AG04449 (cell line): ENCODE measurements at regions of chr19 and their contacts with region 1.

Region 1: GRCh38 chr19:46614114-46614722 is 10.7 kb downstream of the PTGIR start:
- DNase-seq: no peak
- H3K4me3 ChIP-seq: no peak overlapping the region
- CTCF ChIP-seq: peak; percentile 87

Region 2: GRCh38 chr19:46600384-46601317 is 13.6 kb before region 1 on chr19:
- CTCF ChIA-PET with region 1: interaction called, 117 read pairs
- POLR2A ChIA-PET with region 1: interaction called, 6 read pairs
- DNase-seq: peak; percentile 84
- H3K4me3 ChIP-seq: peak overlapping the region; percentile 89
- CTCF ChIP-seq: no peak

Region 3: DNA sequence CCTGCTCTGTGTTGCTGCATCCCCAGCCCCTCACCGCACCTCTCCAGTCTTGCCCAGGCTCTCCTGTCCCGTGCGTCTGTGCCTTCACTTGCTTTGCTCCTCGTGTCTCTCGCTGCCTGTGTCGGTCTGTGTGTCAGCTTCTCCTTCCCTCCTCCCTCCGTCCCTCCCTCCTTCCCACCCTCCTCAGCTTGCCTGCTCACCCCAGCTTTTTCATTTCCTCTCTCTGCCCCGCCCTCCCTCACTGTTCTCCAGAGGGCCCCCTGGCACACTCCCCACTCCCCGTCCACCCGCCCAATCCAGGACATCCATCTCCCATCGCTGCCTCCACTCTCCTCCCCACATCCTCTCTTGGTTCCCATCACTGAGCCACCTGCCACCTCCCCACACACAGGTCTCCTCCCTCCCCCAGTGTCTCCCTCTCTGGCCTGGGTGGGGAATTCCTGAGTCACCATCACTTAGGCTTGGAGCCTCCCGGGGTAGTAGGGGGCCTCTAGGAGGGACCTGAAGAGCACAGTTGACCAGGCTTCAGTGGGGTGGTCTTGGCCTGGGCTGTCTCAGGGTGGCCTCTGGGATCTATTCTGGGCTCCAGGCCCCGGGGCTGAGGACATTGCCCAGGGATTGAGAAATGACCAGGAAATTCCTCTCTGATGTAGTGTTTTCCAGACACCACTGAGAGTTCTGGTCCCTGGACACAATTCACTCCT is 10.9 kb after region 1 on chr19 and contains the start of gene PTGIR:
- CTCF ChIA-PET with region 1: interaction called, 66 read pairs
- POLR2A ChIA-PET with region 1: interaction called, 4 read pairs
- DNase-seq: no peak
- H3K4me3 ChIP-seq: peak within 1 kb of the TSS; percentile 50
- CTCF ChIP-seq: no peak

Region 4: GRCh38 chr19:46634045-46634655 is 19.9 kb after region 1 on chr19:
- CTCF ChIA-PET with region 1: interaction called, 63 read pairs
- POLR2A ChIA-PET with region 1: interaction called, 3 read pairs
- DNase-seq: no peak
- H3K4me3 ChIP-seq: peak overlapping the region; percentile 54
- CTCF ChIP-seq: no peak

Region 5: GRCh38 chr19:46678110-46678732 is 64.0 kb after region 1 on chr19:
- CTCF ChIA-PET with region 1: interaction called, 10 read pairs
- POLR2A ChIA-PET with region 1: no interaction called
- DNase-seq: no peak
- H3K4me3 ChIP-seq: no peak overlapping the region
- CTCF ChIP-seq: no peak

Region 6: DNA sequence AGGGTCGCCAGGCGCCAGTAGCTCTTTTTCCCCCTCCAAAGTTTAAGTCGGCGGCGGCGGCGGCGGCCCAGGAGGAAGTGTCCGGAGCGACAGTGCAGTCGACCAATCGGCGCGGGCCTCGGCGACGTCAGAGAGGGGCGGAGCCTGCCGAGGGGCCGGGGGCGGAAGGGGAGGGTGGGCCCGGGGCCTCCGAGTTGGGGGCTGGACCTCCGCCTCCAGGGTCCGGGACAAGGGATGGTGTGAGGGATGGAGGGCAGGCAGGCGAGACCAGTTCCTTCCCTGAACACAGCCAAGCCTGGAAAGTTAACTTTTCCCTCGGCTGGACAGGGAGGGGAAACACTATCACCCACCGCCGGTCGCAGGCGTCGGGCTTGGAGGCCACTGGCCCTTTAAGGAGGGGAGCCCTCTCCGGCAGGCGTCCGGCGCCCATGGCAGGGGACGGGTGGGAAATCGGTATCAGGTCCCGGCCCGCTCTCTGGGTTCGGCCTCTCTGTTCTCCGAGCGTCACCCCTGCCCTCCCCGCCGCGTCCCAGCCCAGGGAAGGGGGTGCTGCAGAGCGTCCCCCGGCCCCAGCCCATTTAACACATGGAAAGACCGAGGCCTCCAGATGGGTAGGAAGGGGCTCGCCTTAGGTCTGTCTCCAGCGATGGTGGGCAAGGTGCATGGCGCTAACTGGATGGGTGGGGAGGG is 103.0 kb after region 1 on chr19 and contains the start of gene PRKD2:
- CTCF ChIA-PET with region 1: interaction called, 18 read pairs
- POLR2A ChIA-PET with region 1: no interaction called
- DNase-seq: no peak
- H3K4me3 ChIP-seq: peak within 1 kb of the TSS; percentile 78
- CTCF ChIP-seq: no peak

Region 7: DNA sequence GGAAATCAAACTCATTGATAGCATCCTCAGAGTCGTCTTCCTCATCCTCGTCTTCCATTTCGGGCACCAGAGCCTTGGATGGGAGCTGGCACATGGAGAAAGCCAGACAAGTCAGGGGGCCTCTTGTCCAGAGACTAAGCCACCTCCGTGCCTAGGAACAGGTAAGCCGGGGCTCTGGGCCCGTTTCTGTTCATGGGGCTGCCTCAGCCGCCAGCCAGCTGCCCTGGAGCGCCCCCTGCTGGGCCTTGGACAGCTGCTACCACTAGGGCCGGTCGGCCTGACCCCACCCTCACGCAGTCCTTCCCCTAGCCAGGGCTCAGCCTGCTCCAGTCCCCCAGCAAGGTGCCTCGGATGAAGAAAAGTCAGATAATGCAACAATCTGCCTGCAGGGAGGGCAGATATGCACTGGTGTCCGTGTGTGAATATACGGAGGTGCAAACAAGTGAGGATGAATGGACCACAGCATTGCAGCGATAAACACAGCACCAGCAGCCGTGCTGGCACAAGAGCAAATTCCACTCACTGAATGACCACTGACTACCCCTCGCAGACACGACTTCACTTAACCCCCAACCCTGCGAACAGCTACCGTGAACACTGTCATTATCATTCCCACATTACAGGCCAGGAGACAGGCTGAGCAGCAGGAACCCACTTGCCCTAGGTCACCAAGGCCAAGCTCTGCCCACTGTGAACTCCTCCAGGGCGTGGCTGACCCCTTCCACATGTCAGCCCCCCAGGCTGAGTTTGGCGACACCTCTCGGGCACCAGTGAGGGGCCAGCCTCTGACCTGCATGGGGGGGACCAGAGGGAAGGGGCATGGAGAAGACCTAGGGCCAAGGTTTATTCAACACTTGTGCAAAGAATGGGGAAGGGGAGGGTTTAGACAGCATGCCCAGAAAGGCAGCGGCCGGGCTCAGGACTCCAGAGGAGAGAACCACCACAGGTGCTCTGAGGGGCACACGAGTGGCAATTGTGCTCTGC is 114.8 kb after region 1 on chr19:
- CTCF ChIA-PET with region 1: interaction called, 20 read pairs
- POLR2A ChIA-PET with region 1: no interaction called
- DNase-seq: no peak
- H3K4me3 ChIP-seq: no peak overlapping the region
- CTCF ChIP-seq: peak; percentile 90